Caco-2 (cell line): ENCODE measurements at regions of chr10 and their contacts with region 1.

Region 1: DNA sequence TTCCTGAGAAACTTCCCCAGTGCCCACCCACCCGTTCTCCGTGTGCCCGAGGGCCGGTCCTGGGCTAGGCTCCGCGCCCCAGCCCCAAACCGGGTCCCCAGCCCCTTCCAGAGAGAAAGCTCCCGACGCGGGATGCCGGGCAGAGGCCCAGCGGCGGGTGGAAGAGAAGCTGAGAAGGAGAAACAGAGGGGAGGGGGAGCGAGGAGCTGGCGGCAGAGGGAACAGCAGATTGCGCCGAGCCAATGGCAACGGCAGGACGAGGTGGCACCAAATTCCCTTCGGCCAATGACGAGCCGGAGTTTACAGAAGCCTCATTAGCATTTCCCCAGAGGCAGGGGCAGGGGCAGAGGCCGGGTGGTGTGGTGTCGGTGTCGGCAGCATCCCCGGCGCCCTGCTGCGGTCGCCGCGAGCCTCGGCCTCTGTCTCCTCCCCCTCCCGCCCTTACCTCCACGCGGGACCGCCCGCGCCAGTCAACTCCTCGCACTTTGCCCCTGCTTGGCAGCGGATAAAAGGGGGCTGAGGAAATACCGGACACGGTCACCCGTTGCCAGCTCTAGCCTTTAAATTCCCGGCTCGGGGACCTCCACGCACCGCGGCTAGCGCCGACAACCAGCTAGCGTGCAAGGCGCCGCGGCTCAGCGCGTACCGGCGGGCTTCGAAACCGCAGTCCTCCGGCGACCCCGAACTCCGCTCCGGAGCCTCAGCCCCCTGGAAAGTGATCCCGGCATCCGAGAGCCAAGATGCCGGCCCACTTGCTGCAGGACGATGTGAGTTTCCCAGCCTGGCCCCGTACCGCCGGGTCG is at the start of gene SCD:
- DNase-seq: peak; percentile 94 to 95
- H3K4me3 ChIP-seq: peak within 1 kb of the TSS; percentile 90
- H3K4me3 Mint-ChIP-seq: peak within 1 kb of the TSS; percentile 96
- H3K27ac Mint-ChIP-seq: peak within 1 kb of the TSS; percentile 75
- H3K4me1 ChIP-seq: peaks cover 31% of the 10 kb centered on the region
- H3K4me1 Mint-ChIP-seq: peaks cover 43% of the 10 kb centered on the region
- H3K27me3 ChIP-seq: no peaks in the 10 kb centered on the region
- H3K27me3 Mint-ChIP-seq: no peaks in the 10 kb centered on the region
- CTCF ChIP-seq: no peak
- total RNA-seq, gene SCD: 449 and 457 TPM in 2 replicates

Region 2: GRCh38 chr10:99698504-99699080 is 648.4 kb before region 1 on chr10:
- CTCF ChIA-PET with region 1: no interaction called
- POLR2A ChIA-PET with region 1: no interaction called
- intact Hi-C with region 1: no loop called
- DNase-seq: peak in 1 of 2 experiments; percentile 43
- H3K4me3 ChIP-seq: no peak overlapping the region
- H3K4me3 Mint-ChIP-seq: no peak overlapping the region
- H3K27ac Mint-ChIP-seq: no peak overlapping the region
- H3K4me1 ChIP-seq: no peaks in the 10 kb centered on the region
- H3K4me1 Mint-ChIP-seq: peaks cover 4% of the 10 kb centered on the region
- H3K27me3 ChIP-seq: no peaks in the 10 kb centered on the region
- H3K27me3 Mint-ChIP-seq: no peaks in the 10 kb centered on the region
- CTCF ChIP-seq: peak; percentile 14 to 61

Region 3: GRCh38 chr10:100359529-100360150 is 12.7 kb after region 1 on chr10:
- CTCF ChIA-PET with region 1: interaction called, 10 read pairs
- POLR2A ChIA-PET with region 1: interaction called, 16 read pairs
- intact Hi-C with region 1: loop called (anchors 1 kb)
- DNase-seq: peak; percentile 74 to 80
- H3K4me3 ChIP-seq: no peak overlapping the region
- H3K4me3 Mint-ChIP-seq: peak overlapping the region; percentile 46
- H3K27ac Mint-ChIP-seq: peak overlapping the region; percentile 39
- H3K4me1 ChIP-seq: peaks cover 67% of the 10 kb centered on the region
- H3K4me1 Mint-ChIP-seq: peaks cover 59% of the 10 kb centered on the region
- H3K27me3 ChIP-seq: no peaks in the 10 kb centered on the region
- H3K27me3 Mint-ChIP-seq: no peaks in the 10 kb centered on the region
- CTCF ChIP-seq: no peak

Region 4: DNA sequence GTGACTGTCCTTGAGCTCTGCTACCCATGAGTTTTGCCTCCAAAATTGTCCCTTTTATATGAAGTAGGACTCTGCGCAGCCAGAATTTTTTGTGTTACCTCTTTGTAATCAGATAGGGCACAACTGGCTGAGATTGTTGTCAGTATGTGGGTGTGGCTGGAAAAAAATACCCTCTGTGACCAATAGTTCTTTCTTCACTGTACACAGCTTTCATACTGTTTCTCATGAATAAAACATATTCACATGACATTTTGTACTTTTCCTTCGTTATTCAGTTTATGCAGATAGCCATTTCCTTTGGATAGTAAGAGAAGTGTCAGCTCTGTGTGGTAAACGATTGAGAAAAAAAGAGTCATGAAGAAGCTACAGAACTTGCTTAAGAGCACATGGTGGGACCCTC is 66.2 kb after region 1 on chr10:
- CTCF ChIA-PET with region 1: no interaction called
- POLR2A ChIA-PET with region 1: no interaction called
- intact Hi-C with region 1: no loop called
- DNase-seq: no peak
- H3K4me3 ChIP-seq: no peak overlapping the region
- H3K4me3 Mint-ChIP-seq: no peak overlapping the region
- H3K27ac Mint-ChIP-seq: no peak overlapping the region
- H3K4me1 ChIP-seq: no peaks in the 10 kb centered on the region
- H3K4me1 Mint-ChIP-seq: no peaks in the 10 kb centered on the region
- H3K27me3 ChIP-seq: no peaks in the 10 kb centered on the region
- H3K27me3 Mint-ChIP-seq: peaks cover 2% of the 10 kb centered on the region
- CTCF ChIP-seq: no peak

Region 5: DNA sequence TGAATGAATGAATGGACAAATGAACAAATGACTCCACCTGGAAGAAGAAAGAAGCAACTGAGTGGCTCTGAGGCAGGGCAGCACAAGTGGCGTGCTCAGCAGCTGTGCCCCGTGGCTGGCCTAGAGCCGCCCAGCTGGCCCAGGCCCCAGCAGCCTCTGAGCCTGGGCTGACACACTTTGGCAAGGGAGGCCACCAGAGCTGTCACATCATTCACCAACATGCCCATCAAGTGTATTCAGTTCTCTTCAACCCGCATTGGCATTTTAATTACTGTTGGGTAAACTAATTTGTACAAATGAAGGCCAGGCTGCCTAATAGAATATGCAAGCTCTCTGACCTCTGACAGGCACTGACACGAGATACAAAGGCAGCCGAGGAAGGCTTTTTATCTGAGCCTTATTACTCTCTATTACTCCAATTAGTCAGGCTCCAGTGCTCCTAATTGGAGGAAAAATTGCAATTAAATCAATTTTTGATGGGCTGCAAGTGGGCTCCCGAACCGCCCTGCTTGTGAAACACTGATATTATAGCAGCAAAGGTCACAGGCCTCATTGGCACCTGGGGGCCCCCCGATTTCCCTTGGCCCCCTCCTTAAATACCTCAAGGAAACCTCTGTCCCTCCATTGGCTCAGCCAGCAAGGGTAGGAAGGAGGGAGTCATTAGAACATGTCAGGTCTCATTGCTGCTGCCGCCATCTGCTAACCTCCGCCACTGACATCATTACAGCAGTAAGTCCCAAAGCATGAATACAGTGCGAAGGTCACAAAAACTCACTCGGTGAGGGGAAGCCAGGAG is 1283.1 kb after region 1 on chr10:
- CTCF ChIA-PET with region 1: no interaction called
- POLR2A ChIA-PET with region 1: interaction called, 12 read pairs
- intact Hi-C with region 1: no loop called
- DNase-seq: peak in 1 of 2 experiments; percentile 12
- H3K4me3 ChIP-seq: no peak overlapping the region
- H3K4me3 Mint-ChIP-seq: no peak overlapping the region
- H3K27ac Mint-ChIP-seq: no peak overlapping the region
- H3K4me1 ChIP-seq: peaks cover 7% of the 10 kb centered on the region; the same call in 1 of the 2 replicates
- H3K4me1 Mint-ChIP-seq: peaks cover 7% of the 10 kb centered on the region
- H3K27me3 ChIP-seq: no peaks in the 10 kb centered on the region
- H3K27me3 Mint-ChIP-seq: no peaks in the 10 kb centered on the region
- CTCF ChIP-seq: no peak